ENCODE measurements at regions of chr15 and their contacts with region 1.

Region 1: GRCh38 chr15:95503640-95504227 is 826.8 kb upstream of the NR2F2 start:
- DNase-seq: peak; percentile 1
- H3K4me3 Mint-ChIP-seq: no peak overlapping the region
- H3K27ac Mint-ChIP-seq: peak overlapping the region; percentile 50
- H3K4me1 Mint-ChIP-seq: peaks cover 29% of the 10 kb centered on the region
- H3K27me3 Mint-ChIP-seq: no peaks in the 10 kb centered on the region

Region 2: DNA sequence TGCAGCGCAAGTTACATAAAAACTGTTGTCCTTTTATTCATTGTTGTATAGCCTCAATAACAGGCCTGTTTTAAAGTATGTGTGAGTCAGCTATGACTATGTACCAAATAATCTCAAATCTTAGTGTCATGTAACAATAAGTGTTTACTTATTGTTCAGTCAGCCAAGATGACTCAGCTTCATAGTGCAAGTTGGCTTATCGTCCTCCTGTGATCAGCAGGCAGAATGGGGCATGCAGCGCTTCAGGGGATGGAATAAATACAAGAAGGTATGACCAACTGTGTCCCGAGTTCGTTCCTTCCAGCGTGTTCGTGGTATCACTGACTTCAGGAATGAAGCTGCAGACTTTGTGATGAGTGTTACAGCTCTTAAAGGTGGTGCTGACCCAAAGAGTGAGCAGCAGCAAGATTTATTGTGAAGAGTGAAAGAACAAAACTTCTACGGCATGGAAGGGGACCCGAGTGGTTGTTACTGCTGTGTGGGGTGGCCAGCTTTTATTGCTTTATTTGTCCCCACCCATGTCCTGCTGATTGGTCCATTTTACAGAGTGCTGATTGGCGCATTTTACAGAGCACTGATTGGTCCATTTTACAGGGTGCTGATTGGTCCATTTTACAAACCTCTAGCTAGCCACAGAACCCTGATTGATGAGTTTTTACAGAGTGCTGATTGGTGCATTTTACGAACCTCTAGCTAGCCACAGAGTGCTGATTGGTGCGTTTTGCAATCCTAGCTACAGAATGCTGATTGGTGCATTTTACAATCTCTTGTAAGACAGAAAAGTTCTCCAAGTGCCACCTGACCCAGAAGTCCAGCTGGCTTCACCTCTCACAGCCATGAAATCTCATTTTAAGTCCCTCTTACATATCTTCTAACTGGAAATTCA is 256.4 kb before region 1 on chr15:
- intact Hi-C with region 1: no loop called
- DNase-seq: no peak
- H3K4me3 Mint-ChIP-seq: no peak overlapping the region
- H3K27ac Mint-ChIP-seq: no peak overlapping the region
- H3K4me1 Mint-ChIP-seq: no peaks in the 10 kb centered on the region
- H3K27me3 Mint-ChIP-seq: peaks cover 2% of the 10 kb centered on the region

Region 3: DNA sequence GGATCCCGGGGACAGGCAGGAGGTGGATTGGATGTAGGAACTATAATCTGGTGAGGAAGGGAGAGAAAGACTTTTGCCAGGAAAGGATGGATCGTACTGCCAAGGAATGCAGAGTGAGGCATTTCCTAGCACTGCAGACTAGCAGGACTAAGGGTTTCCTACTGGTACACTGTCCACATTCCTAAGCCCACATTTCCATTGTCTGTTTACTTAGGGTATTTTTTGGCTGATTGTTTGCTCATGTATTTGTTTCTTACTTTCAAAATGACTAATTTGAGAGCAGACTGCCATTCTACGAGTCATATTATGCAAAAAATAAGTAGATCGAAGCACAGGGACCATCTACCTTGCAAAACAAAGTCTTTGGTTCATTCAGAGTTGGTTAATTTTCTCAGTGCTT is 202.8 kb before region 1 on chr15:
- intact Hi-C with region 1: loop called (anchors 1 kb)
- DNase-seq: no peak
- H3K4me3 Mint-ChIP-seq: no peak overlapping the region
- H3K27ac Mint-ChIP-seq: peak overlapping the region; percentile 74
- H3K4me1 Mint-ChIP-seq: peaks cover 47% of the 10 kb centered on the region
- H3K27me3 Mint-ChIP-seq: peaks cover 29% of the 10 kb centered on the region

Region 4: GRCh38 chr15:95446854-95447253 is 56.9 kb before region 1 on chr15:
- intact Hi-C with region 1: loop called (anchors 2 kb)
- DNase-seq: peak; percentile 30
- H3K4me3 Mint-ChIP-seq: peak overlapping the region; percentile 48
- H3K27ac Mint-ChIP-seq: peak overlapping the region; percentile 78
- H3K4me1 Mint-ChIP-seq: peaks cover 27% of the 10 kb centered on the region
- H3K27me3 Mint-ChIP-seq: peaks cover 6% of the 10 kb centered on the region

Region 5: DNA sequence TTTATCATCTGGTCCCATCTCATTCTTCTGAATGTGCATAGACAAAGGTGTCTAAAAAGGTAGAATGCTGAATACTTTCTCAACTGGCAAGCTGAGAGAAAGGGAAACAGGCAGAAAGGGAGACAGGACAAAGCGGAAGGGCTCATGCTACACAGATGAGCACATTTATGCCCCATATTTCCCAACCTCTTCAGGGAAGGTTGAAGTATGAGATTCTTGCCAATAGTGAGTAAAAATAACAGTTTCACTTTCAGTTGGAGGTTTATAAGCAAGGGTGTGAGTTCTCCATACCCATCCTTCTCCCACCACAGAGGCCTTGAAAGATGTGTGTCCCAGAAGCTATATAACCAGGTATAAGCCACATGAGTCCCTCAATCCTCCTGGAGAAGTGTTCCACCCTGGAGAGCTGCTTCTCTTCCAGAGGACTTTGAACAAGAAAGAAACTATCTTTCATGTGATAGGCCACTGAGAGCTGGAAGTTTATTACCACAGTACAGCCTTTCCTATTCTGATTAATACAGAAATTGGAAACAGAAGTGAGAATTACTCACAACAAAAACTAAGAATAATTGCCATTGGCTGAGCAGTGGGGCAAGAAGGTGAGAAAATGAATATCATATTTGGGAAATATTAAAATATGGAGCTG is 117.3 kb after region 1 on chr15:
- intact Hi-C with region 1: loop called (anchors 10 kb)
- DNase-seq: no peak
- H3K4me3 Mint-ChIP-seq: peak overlapping the region; percentile 8
- H3K27ac Mint-ChIP-seq: peak overlapping the region; percentile 70
- H3K4me1 Mint-ChIP-seq: peaks cover 12% of the 10 kb centered on the region
- H3K27me3 Mint-ChIP-seq: no peaks in the 10 kb centered on the region

Region 6: DNA sequence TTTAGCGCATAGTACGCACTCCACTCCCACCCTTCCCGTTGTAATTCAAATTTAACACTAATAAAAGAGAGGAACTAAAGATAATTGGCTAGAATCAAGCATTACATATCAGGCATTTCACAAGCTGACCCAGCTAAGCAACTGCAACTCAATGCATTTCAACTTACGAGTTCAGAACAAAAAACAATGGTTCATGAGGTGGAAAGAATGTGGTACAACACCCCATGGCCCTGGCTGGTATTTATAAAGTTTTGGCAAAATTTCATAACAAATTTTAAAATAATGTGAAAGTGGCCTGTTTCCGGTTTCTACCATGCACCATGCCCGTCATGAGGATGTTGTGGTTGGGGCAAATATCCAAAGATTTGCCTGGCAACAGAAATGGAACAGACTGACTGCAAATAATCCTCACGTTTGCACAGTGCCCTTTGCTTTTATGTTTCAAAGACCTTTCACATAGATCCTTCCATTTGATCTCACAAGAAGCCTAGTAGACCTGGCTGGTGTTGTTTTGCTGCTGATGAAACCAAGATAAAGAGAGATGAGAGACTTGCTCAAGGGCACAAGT is 371.5 kb after region 1 on chr15:
- intact Hi-C with region 1: loop called (anchors 1 kb)
- DNase-seq: no peak
- H3K4me3 Mint-ChIP-seq: no peak overlapping the region
- H3K27ac Mint-ChIP-seq: no peak overlapping the region
- H3K4me1 Mint-ChIP-seq: peaks cover 40% of the 10 kb centered on the region
- H3K27me3 Mint-ChIP-seq: peaks cover 3% of the 10 kb centered on the region

Measured in activated T-helper 1 cell treated with anti-CD3 and anti-CD28 coated beads, Interleukin-12 subunit alpha, Interleukin-12 subunit beta, Interleukin-2, Interleukin-4 antibody, amounts not matched to agents 30 ng/mL and 10 ng/mL and 1 ng/mL, durations not matched to agents 14 hours and 24 hours and 36 hours (primary cell).